Activated CD8-positive, alpha-beta T cell treated with anti-CD3 and anti-CD28 coated beads for 36 hours (primary cell): ENCODE measurements at regions of chr6 and their contacts with region 1.

Region 1: GRCh38 chr6:29016559-29017427 is 11.7 kb upstream of the ZNF311 start:
- DNase-seq: peak; percentile 93
- ATAC-seq: peak; percentile 90
- H3K4me3 Mint-ChIP-seq: peak overlapping the region; percentile 81
- H3K27ac Mint-ChIP-seq: peak overlapping the region; percentile 78
- H3K4me1 Mint-ChIP-seq: peaks cover 17% of the 10 kb centered on the region
- H3K27me3 Mint-ChIP-seq: peaks cover 25% of the 10 kb centered on the region
- CTCF ChIP-seq: peak; percentile 81

Region 2: DNA sequence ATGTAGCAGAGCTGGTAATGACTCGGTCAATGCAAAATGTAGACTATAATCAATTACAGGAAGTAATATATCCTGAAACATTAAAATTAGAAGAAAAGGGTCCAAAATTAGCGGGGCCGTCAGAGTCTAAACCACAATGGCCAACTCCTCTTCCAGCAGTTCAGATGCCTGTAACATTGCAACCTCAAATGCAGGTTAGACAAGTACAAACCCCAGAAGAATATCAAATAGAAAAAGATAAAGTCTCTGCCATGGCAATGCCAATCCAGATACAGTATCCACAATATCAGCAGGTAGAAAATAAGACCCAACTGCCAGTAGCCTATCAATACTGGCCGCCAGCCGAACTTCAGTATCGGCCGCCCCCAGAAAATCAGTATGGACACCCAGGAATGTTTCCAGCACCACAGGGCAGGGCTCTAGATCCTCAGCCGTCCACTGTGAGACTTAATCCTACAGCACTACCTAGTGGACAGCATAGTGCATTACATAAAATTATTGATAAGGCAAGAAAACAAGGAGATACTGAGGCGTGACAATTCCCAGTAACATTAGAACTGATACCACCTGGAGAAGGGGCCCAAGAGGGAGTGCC is 332.8 kb before region 1 on chr6:
- CTCF ChIA-PET with region 1: interaction called, 10 read pairs
- POLR2A ChIA-PET with region 1: no interaction called
- intact Hi-C with region 1: loop called (anchors 2 kb)
- DNase-seq: no peak
- ATAC-seq: peak; percentile 64
- H3K4me3 Mint-ChIP-seq: no peak overlapping the region
- H3K27ac Mint-ChIP-seq: no peak overlapping the region
- H3K4me1 Mint-ChIP-seq: no peaks in the 10 kb centered on the region
- H3K27me3 Mint-ChIP-seq: peaks cover 77% of the 10 kb centered on the region
- CTCF ChIP-seq: peak; percentile 72

Region 3: GRCh38 chr6:28863604-28864320 is 153.0 kb before region 1 on chr6:
- CTCF ChIA-PET with region 1: interaction called, 24 read pairs
- POLR2A ChIA-PET with region 1: no interaction called
- intact Hi-C with region 1: no loop called
- DNase-seq: peak; percentile 89
- ATAC-seq: peak; percentile 54
- H3K4me3 Mint-ChIP-seq: peak overlapping the region; percentile 89
- H3K27ac Mint-ChIP-seq: peak overlapping the region; percentile 84
- H3K4me1 Mint-ChIP-seq: peaks cover 30% of the 10 kb centered on the region
- H3K27me3 Mint-ChIP-seq: peaks cover 3% of the 10 kb centered on the region
- CTCF ChIP-seq: no peak

Region 4: DNA sequence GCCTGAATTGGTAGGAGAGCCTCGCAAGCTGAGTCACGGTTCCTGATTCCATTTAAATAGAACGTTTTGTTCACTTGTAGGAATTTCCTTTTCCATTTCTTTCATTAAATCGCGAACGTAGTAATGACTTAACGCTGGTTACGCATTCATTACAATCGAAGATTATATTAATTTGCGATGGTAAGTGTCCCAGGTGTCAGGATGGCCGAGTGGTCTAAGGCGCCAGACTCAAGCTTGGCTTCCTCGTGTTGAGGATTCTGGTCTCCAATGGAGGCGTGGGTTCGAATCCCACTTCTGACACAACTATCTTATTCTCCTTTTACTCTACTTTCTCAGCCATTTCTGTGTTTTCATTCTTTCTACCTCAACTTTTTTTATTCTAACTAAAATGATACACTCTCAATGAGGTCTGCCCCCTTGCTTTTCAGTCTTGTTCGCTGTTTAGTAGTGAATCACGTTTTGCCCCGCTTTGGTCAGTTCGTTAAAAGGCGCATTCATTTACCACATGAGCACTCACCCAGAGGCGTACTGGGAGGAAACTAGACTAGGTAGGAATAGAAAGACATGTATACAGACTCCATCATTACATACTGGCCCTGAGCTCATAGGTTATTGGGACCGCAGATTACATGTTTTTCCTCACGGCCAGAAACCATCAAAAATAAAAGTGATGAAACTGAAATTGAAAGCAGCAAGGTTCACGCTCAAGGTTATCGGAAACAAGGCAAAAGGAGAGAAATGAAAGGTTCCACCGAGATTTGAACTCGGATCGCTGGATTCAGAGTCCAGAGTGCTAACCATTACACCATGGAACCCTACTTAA is 75.7 kb before region 1 on chr6:
- CTCF ChIA-PET with region 1: interaction called, 14 read pairs
- POLR2A ChIA-PET with region 1: no interaction called
- intact Hi-C with region 1: no loop called
- DNase-seq: peak; percentile 89
- ATAC-seq: peak; percentile 69
- H3K4me3 Mint-ChIP-seq: peak overlapping the region; percentile 83
- H3K27ac Mint-ChIP-seq: peak overlapping the region; percentile 99
- H3K4me1 Mint-ChIP-seq: peaks cover 40% of the 10 kb centered on the region
- H3K27me3 Mint-ChIP-seq: peaks cover 2% of the 10 kb centered on the region
- CTCF ChIP-seq: no peak

Region 5: GRCh38 chr6:28981833-28982475 is 34.8 kb before region 1 on chr6:
- CTCF ChIA-PET with region 1: interaction called, 14 read pairs
- POLR2A ChIA-PET with region 1: interaction called, 3 read pairs
- intact Hi-C with region 1: loop called (anchors 5 kb)
- DNase-seq: peak; percentile 77
- ATAC-seq: peak; percentile 48
- H3K4me3 Mint-ChIP-seq: peak overlapping the region; percentile 84
- H3K27ac Mint-ChIP-seq: peak overlapping the region; percentile 91
- H3K4me1 Mint-ChIP-seq: peaks cover 53% of the 10 kb centered on the region
- H3K27me3 Mint-ChIP-seq: peaks cover 38% of the 10 kb centered on the region
- CTCF ChIP-seq: no peak

Region 6: DNA sequence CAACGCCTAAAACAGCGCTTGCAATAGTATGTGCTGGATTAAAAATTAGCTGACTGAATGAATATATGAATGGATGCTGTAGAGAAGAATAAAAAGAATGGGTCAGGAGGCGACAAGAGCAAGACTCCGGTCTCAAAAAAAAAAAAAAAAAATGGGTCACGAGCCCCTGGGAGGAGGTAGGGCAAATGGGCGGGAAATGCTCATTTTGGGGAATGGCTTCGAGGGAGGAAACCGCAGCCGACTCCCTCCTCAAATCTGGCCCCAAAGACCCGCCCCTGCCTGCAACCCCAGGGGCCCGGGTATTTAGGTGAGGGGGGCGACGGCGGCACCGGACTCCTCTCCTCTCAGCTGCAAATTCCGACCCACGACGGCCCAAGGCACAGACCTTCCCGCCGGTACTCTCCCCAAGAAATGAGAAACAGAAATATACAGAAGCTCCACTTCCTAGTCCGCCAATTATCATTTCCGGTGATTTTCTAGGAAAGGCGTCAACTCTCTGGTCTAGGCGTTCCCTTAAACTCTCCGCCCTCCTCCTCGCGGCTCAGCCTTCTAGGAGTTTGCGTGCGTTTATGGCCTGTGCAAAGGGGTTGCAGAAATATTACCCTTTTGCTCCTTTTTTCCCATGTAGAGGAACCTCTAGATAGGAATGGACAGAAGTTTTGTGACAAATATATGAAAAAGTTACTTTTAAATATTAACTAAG is 11.5 kb before region 1 on chr6 and contains the start of gene ZNF311:
- CTCF ChIA-PET with region 1: interaction called, 19 read pairs
- POLR2A ChIA-PET with region 1: interaction called, 4 read pairs
- intact Hi-C with region 1: no loop called
- DNase-seq: peak; percentile 58
- ATAC-seq: peak; percentile 92
- H3K4me3 Mint-ChIP-seq: peak within 1 kb of the TSS; percentile 76
- H3K27ac Mint-ChIP-seq: peak within 1 kb of the TSS; percentile 76
- H3K4me1 Mint-ChIP-seq: peaks cover 15% of the 10 kb centered on the region
- H3K27me3 Mint-ChIP-seq: peaks cover 9% of the 10 kb centered on the region
- CTCF ChIP-seq: no peak
- total RNA-seq, gene ZNF311: 0.31 to 0.43 TPM

Region 7: DNA sequence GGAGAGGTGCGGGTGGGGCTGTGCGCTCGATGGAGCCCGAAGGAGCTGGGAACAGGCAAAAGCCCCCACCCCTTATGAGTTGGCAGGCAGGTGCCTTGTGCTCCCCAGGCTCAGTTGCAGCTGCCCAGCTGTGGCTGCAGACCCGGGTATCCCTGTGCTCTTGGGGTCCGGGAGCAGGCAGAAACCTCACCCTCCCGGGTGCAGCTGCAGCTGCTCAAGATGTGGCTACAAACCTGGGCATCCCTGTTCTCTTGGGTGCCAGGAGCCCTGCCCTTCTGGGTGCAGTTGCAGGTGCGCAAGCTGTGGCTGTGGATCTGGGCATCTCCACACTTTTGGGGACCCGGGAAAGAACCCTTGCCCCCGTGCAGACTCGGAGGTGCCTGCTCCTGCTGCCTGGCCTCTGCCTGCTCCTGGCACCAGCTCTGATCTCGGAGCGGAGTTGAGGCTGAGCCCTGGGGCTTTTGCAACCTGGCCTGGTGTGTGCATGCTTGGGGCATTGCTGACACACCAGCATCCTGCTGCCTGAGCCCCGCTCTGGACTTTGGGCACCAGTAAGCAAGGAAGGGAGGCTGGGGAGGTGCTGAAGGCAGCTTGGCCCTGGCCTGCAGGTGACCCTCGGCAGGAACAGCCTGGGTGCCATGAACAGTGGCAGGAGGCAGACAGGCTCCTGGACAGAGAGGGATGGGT is 112.7 kb after region 1 on chr6:
- CTCF ChIA-PET with region 1: no interaction called
- POLR2A ChIA-PET with region 1: no interaction called
- intact Hi-C with region 1: no loop called
- DNase-seq: no peak
- ATAC-seq: no peak
- H3K4me3 Mint-ChIP-seq: no peak overlapping the region
- H3K27ac Mint-ChIP-seq: no peak overlapping the region
- H3K4me1 Mint-ChIP-seq: no peaks in the 10 kb centered on the region
- H3K27me3 Mint-ChIP-seq: peaks cover 26% of the 10 kb centered on the region
- CTCF ChIP-seq: no peak